ENCODE measurements at regions of chr17 and their contacts with region 1.

Region 1: DNA sequence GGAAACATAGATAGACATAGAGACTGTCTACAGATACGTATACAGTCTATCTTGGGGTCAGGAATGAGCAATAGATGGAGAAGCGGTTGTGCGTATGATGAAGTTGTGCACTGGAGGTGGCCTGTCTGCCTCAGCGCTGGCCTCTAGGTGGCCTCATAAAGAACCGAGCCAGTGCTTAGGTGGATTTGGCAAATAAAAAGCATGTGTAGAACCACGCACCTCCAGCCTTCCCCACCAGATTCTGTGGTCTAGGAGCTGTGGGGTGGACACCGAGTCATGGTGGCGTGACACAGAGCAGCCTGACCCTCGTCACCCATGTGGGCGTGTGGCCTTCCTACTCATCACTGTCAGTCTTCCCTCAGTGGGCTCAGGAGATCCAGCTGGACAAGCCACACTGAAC is 34.0 kb downstream of the PGS1 start:
- DNase-seq: peak; percentile 46
- H3K4me3 Mint-ChIP-seq: peak overlapping the region; percentile 72
- H3K27ac Mint-ChIP-seq: peak overlapping the region; percentile 91
- H3K4me1 Mint-ChIP-seq: peaks cover 92% of the 10 kb centered on the region
- H3K27me3 Mint-ChIP-seq: no peaks in the 10 kb centered on the region

Region 2: DNA sequence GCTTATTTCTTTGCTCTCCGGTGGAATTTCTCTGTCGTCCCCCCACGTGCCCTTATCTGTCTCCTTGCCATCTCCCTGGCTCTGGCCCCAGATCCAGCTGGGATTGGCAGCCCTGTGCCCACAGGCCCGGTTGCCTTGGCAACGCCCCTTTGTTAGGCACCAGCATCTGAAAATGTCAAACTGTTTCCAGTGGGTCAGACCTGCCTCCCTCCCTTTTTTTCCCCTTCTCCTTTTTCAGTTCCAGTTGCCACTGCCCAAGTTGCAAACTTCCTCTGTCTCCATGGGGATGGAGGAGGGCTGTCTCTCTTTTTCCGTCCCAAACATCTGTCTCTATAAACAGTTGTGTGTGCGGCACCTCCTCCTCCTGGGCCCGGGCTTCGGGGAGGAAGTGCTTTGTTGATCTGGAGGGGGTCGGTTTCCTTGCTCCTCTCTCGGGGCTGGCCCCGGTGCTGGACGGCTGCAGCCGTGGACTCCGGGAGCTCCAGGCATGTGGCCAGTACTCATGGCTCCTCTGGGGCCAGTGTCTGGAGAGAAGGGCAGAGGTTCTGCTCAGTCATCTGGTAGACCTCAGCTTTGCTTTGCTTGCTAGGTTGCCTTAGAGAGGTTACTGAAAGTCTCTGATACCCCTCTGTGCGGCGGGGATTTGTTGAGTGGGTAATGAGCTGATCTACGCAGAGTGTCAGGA is 87.9 kb before region 1 on chr17:
- CTCF ChIA-PET with region 1: no interaction called
- POLR2A ChIA-PET with region 1: no interaction called
- DNase-seq: peak; percentile 44
- H3K4me3 Mint-ChIP-seq: no peak overlapping the region
- H3K27ac Mint-ChIP-seq: peak overlapping the region; percentile 70
- H3K4me1 Mint-ChIP-seq: peaks cover 21% of the 10 kb centered on the region
- H3K27me3 Mint-ChIP-seq: no peaks in the 10 kb centered on the region

Region 3: GRCh38 chr17:78401246-78401645 is 11.2 kb before region 1 on chr17:
- CTCF ChIA-PET with region 1: interaction called, 10 read pairs
- POLR2A ChIA-PET with region 1: no interaction called
- DNase-seq: no peak
- H3K4me3 Mint-ChIP-seq: no peak overlapping the region
- H3K27ac Mint-ChIP-seq: no peak overlapping the region
- H3K4me1 Mint-ChIP-seq: peaks cover 5% of the 10 kb centered on the region
- H3K27me3 Mint-ChIP-seq: no peaks in the 10 kb centered on the region